A549 (cell line): ENCODE measurements at regions of chr7 and their contacts with region 1.

Region 1: GRCh38 chr7:139753081-139753692 is 24.6 kb downstream of the HIPK2 start:
- DNase-seq: peak; percentile 36 to 70
- ATAC-seq: peak; percentile 91 to 96
- H3K4me3 ChIP-seq: no peak overlapping the region
- H3K27ac ChIP-seq: peak overlapping the region; percentile 59 to 80
- H3K4me1 ChIP-seq: peaks cover 39% of the 10 kb centered on the region
- CTCF ChIP-seq: no peak
- EP300 ChIP-seq: no peak
- POLR2A ChIP-seq: no peak
- RAD21 ChIP-seq: peak; percentile 3 to 6; a peak in 1 of 5 replicates

Region 2: DNA sequence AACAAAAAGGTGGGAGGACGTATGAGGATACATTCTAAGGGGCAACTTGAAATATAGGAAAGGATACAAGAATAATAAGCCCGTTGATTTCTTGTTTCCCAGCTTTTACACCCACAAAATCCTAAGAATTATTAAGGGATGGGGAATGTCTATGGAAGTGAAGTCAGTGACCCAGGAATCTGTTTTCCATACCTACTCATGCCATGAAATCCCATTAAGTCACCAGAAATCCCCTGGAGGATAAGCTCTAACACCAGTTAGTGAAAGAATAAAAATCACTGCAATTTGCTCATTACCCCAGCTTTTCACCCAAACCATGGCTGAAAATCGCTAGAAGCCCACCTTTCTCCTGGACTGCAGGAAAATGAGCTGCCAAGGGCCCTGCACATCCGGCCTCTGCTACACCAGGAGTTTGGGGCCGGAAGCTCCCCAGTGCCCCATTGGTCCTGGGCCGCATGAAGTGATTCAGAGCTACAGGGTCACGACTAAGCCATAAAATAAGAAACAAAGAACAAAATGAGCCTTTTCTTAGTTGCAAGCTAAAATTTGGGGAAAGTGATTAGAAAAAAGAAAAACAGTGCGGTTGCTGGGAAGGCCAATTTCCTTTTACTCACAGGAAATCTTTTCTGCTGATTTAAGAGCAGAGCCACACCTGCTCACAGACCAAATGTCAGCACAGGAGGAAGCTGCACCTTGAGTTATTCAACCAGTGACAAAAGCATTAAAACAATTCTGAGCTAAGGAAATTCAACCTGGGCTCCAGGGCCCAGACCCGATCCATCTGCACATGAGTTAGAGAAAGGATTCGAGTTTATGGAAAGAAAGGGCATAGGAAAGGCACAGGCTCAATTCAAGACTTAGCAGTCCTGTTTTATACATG is 15.7 kb before region 1 on chr7:
- CTCF ChIA-PET with region 1: interaction called, 13 read pairs
- POLR2A ChIA-PET with region 1: interaction called, 6 read pairs
- DNase-seq: no peak
- ATAC-seq: no peak
- H3K4me3 ChIP-seq: no peak overlapping the region
- H3K27ac ChIP-seq: peak overlapping the region; percentile 35 to 52; a peak in 4 of 6 replicates
- H3K4me1 ChIP-seq: peaks cover 79% of the 10 kb centered on the region
- CTCF ChIP-seq: no peak
- EP300 ChIP-seq: no peak
- POLR2A ChIP-seq: no peak
- RAD21 ChIP-seq: no peak

Region 3: GRCh38 chr7:139767561-139767982 is 14.4 kb after region 1 on chr7:
- CTCF ChIA-PET with region 1: interaction called, 15 read pairs
- POLR2A ChIA-PET with region 1: interaction called, 3 read pairs
- DNase-seq: no peak
- ATAC-seq: no peak
- H3K4me3 ChIP-seq: no peak overlapping the region
- H3K27ac ChIP-seq: peak overlapping the region in 1 of 2 experiments; percentile 6; a peak in 1 of 6 replicates
- H3K4me1 ChIP-seq: peaks cover 32% of the 10 kb centered on the region
- CTCF ChIP-seq: no peak
- EP300 ChIP-seq: no peak
- POLR2A ChIP-seq: no peak
- RAD21 ChIP-seq: no peak

Region 4: DNA sequence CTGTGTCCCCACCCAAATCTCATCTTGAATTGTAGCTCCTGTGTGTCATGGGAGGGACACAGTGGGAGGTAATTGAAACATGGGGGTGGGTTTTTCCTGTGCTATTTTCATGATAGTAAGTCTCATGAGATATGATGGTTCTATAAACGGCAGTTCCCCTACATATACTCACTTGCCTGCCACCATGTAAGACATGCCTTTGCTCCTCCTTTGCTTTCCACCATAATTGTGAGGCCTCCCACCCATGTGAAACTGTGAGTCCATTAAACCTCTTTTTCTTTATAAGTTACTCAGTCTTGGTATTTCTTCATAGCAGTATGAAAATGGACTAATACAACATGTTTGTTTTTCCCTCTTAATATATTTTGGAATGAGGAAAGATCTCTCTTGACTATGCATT is 51.4 kb after region 1 on chr7:
- CTCF ChIA-PET with region 1: no interaction called
- POLR2A ChIA-PET with region 1: no interaction called
- DNase-seq: no peak
- ATAC-seq: no peak
- H3K4me3 ChIP-seq: no peak overlapping the region
- H3K27ac ChIP-seq: no peak overlapping the region
- H3K4me1 ChIP-seq: no peaks in the 10 kb centered on the region
- CTCF ChIP-seq: no peak
- EP300 ChIP-seq: no peak
- POLR2A ChIP-seq: no peak
- RAD21 ChIP-seq: no peak